Activated CD4-positive, alpha-beta T cell treated with anti-CD3 and anti-CD28 coated beads for 36 hours (primary cell): ENCODE measurements at regions of chr10 and their contacts with region 1.

Region 1: DNA sequence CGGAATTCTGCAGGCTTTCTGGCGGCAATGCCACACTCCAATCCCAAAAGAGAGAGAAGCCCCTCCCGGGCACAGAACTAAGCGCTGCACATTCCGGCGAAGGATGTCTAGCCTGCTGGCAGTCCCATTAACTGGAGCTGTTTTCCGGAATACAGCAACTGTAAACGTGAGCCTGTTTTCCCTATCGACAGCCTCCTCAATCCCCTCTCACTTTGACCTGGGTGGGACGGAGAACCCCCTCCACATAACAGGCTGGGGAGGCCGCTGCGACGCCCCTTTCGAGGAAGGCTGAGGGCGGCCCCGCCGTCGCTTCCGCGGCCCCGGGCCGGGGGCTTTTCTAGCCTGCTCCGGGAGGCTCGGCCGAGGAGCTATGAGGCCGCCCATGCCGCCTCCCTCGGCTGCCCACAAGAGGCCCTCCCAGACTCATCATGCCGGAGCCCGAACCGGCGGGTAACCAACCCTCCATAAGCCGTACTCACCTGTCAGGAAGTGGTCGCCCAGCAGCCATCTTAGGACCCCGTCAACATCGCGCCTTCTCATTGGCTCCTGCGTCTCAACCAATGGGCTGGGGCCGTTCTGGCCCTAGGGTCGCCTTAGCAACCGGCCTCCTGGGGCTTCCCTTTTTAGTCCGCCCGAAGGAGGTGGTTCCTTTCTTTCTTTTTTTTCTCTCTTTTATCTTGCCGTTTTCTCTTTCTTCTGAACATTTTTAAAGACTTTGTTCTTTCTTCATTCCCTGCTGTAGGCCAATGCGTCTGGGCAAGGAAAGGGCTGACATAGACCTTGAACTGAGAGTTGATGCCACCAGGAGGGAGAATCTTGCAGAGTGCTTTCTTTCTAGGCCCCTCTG is at the start of gene FAM204A:
- DNase-seq: peak; percentile 96
- ATAC-seq: peak; percentile 98
- H3K4me3 Mint-ChIP-seq: peak within 1 kb of the TSS; percentile 81
- H3K27ac Mint-ChIP-seq: peak within 1 kb of the TSS; percentile 89
- H3K4me1 Mint-ChIP-seq: peaks cover 37% of the 10 kb centered on the region
- H3K27me3 Mint-ChIP-seq: no peaks in the 10 kb centered on the region
- total RNA-seq, gene FAM204A: 44.1 to 55.8 TPM

Region 2: DNA sequence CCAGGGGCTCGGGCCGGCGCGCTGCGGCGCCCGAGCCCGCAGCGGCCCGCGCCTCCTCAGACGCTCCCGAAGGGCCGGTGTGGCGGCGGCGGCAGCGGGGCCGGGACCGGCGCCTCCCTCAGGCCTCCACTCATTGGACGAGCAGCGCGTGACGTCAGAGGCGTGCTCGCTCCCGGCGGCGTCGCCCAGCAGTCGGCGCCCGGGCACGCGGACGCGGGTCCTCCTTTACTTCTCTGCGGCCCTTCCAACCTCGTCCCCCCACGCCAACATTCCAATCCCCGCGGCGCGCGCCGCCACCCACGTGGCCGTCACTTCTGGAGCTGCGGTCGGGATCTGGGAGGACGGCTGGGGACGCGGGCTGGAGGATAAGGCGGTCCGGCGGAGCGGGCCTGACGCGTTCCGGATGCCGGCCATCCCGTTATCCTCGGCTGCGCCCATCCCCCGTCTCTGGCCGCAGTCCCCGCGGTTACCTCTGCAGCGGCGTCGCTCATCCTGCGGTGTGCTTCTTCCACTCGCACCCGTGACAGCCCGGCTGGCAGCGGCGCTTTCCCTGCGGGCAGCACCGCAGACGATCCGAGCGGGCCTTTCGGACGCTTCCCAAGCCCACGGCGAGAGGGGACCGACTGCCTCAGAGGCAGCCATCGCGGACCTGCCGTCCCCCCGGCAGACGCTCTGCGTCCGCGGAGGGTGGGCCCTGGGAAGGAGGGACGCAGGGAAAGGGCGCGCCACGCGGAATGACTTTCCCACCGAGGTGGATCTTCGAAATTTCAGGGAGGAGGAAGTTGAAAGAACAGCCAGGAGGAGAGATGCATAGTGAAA is 966.4 kb before region 1 on chr10 and contains the start of gene PDZD8:
- CTCF ChIA-PET with region 1: no interaction called
- POLR2A ChIA-PET with region 1: no interaction called
- intact Hi-C with region 1: loop called (anchors 2 to 10 kb)
- DNase-seq: peak; percentile 94
- ATAC-seq: peak; percentile 85
- H3K4me3 Mint-ChIP-seq: peak within 1 kb of the TSS; percentile 92
- H3K27ac Mint-ChIP-seq: peak within 1 kb of the TSS; percentile 72
- H3K4me1 Mint-ChIP-seq: peaks cover 29% of the 10 kb centered on the region
- H3K27me3 Mint-ChIP-seq: peaks cover 15% of the 10 kb centered on the region
- total RNA-seq, gene PDZD8: 12.5 to 15.9 TPM

Region 3: DNA sequence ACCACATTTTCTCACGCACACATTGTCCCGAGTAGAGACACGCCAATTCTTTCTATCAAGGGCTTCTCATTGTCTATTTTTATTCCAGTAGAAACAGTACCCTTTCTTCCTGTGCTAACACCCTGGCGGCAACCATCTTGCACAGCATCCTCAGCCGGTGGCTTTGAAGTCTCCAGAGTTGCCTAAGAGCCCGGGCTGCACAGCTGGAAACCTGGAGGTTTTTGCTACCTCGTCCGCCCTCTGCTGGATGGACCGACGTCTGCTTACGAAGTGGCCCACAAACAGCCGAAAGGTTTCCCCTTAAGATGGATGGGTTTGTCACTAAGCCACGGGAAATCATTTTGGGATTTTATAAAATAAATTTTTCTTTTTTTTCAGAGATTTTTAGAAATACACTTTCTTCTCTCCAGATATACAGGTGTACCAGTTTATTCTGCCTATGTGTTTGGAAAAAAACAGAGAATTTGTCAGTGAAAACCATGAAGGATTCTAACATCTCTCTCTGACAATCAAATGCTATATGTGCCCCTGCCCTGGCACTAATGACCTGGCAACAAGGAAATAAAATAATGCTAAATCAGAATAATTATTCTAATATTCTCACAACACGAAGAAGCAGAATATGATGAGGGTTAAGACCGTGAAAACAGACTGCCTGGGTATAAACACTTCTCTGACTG is 81.9 kb after region 1 on chr10:
- CTCF ChIA-PET with region 1: interaction called, 3 read pairs
- POLR2A ChIA-PET with region 1: no interaction called
- intact Hi-C with region 1: loop called in 1 of 2 experiments (anchors 5 kb)
- DNase-seq: peak; percentile 87
- ATAC-seq: peak; percentile 94
- H3K4me3 Mint-ChIP-seq: no peak overlapping the region
- H3K27ac Mint-ChIP-seq: no peak overlapping the region
- H3K4me1 Mint-ChIP-seq: peaks cover 2% of the 10 kb centered on the region
- H3K27me3 Mint-ChIP-seq: peaks cover 24% of the 10 kb centered on the region

Region 4: DNA sequence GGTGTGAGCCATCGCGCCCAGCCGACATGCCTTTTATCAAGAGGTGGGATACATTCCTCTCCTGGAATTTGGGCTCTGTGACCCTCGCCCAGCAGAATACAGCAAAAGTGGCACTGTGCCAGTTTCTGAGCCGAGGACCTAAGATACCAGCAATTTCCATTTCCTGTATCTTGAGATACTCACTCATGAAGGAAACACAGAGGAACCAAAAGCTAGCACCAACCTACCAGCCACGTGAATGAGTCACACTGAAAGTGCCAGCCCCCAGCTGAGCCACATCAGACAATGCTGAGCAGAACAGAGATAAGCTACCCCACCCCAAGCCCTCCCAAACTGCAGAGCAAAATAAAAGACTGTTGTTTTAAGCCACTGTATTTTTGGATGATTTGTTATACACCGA is 356.4 kb after region 1 on chr10:
- CTCF ChIA-PET with region 1: no interaction called
- POLR2A ChIA-PET with region 1: no interaction called
- intact Hi-C with region 1: loop called (anchors 5 to 10 kb)
- DNase-seq: peak; percentile 89
- ATAC-seq: peak; percentile 100
- H3K4me3 Mint-ChIP-seq: peak overlapping the region; percentile 16
- H3K27ac Mint-ChIP-seq: peak overlapping the region; percentile 18
- H3K4me1 Mint-ChIP-seq: peaks cover 58% of the 10 kb centered on the region
- H3K27me3 Mint-ChIP-seq: peaks cover 2% of the 10 kb centered on the region